ENCODE measurements at regions of chr17 and their contacts with region 1.

Region 1: GRCh38 chr17:4004517-4005295 is 40.5 kb upstream of the ATP2A3 start:
- DNase-seq: peak; percentile 64
- H3K4me3 ChIP-seq: peak overlapping the region in 1 of 2 donors; percentile 26
- H3K27ac ChIP-seq: no peak overlapping the region
- H3K4me1 ChIP-seq: no peaks in the 10 kb centered on the region
- H3K27me3 ChIP-seq: no peaks in the 10 kb centered on the region
- CTCF ChIP-seq: peak; percentile 91 to 99 (median 96)
- POLR2A ChIP-seq: no peak

Region 2: GRCh38 chr17:3935140-3935542 is 69.6 kb before region 1 on chr17:
- intact Hi-C with region 1: loop called (anchors 10 kb)
- DNase-seq: peak; percentile 86
- H3K4me3 ChIP-seq: no peak overlapping the region
- H3K27ac ChIP-seq: no peak overlapping the region
- H3K4me1 ChIP-seq: no peaks in the 10 kb centered on the region
- H3K27me3 ChIP-seq: no peaks in the 10 kb centered on the region
- CTCF ChIP-seq: peak; percentile 48 to 61 (median 58)
- POLR2A ChIP-seq: no peak